ENCODE measurements at regions of chr3 and their contacts with region 1.

Region 1: DNA sequence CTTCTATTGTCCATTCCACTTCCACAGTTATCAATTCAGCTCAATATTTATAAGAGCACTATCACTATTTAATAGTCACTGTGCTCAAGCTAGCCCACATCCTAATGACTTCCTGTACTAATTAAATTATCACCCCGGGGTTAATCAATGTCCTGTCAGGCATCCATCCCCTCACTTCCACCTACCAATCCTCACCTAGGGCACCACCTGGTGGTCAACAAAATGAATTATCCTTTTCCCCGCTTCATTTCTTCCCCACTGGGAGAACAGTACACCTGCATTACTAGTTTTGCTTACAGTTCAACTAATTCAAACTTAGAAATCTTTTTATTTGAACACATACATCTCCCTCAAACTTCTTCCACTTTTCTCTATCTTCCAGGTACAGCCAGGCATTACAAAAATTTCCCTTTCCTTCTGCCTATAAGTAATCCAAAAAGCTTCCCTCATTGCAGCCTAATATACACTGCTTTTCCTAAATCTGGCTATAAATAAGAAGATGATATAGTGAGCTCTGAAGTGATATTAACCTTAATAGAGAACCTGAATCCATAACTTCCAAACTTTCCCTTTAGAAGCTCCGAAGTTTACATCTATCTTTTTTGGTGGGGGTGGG is 68.5 kb downstream of the TMCC1 start:
- DNase-seq: peak; percentile 39 to 52
- H3K4me3 ChIP-seq: no peak overlapping the region
- H3K27ac ChIP-seq: no peak overlapping the region
- H3K4me1 ChIP-seq: peaks cover 32% of the 10 kb centered on the region
- H3K27me3 ChIP-seq: no peaks in the 10 kb centered on the region
- CTCF ChIP-seq: peak; percentile 87

Region 2: GRCh38 chr3:129323651-129324294 is 501.3 kb before region 1 on chr3:
- CTCF ChIA-PET with region 1: no interaction called
- POLR2A ChIA-PET with region 1: no interaction called
- intact Hi-C with region 1: loop called (anchors 5 kb)
- DNase-seq: no peak
- H3K4me3 ChIP-seq: no peak overlapping the region
- H3K27ac ChIP-seq: no peak overlapping the region
- H3K4me1 ChIP-seq: no peaks in the 10 kb centered on the region
- H3K27me3 ChIP-seq: no peaks in the 10 kb centered on the region
- CTCF ChIP-seq: no peak; the same call in 1 of the 2 replicates

Region 3: GRCh38 chr3:129490242-129491045 is 334.6 kb before region 1 on chr3:
- CTCF ChIA-PET with region 1: interaction called, 17 read pairs
- POLR2A ChIA-PET with region 1: no interaction called
- intact Hi-C with region 1: loop called (anchors 1 kb)
- DNase-seq: peak; percentile 80 to 84
- H3K4me3 ChIP-seq: no peak overlapping the region
- H3K27ac ChIP-seq: peak overlapping the region; percentile 66
- H3K4me1 ChIP-seq: peaks cover 49% of the 10 kb centered on the region
- H3K27me3 ChIP-seq: no peaks in the 10 kb centered on the region
- CTCF ChIP-seq: peak; percentile 91

Region 4: DNA sequence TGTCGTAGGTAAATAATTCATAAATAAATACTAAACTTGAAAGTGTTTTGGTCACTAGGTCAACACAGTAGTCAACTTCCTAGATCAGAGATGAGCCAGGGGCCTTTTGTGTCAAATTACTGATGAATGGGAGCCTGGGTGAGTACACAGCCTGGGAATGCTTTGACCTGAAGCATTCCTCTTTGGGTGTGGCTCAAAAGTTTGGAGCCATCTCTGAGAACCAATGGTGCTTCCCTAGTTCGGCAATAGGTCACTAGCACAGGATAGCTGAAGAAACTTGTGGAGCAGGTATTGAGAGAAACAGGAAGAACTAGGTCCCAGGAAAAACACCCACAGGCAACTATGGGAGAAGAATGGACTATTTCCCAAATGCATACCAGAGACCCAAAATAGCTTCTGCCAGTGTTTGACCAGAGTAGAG is 162.0 kb before region 1 on chr3:
- CTCF ChIA-PET with region 1: interaction called, 3 read pairs
- POLR2A ChIA-PET with region 1: no interaction called
- intact Hi-C with region 1: loop called (anchors 1 kb)
- DNase-seq: peak; percentile 91 to 100
- H3K4me3 ChIP-seq: no peak overlapping the region
- H3K27ac ChIP-seq: peak overlapping the region; percentile 98
- H3K4me1 ChIP-seq: peaks cover 93% of the 10 kb centered on the region
- H3K27me3 ChIP-seq: no peaks in the 10 kb centered on the region
- CTCF ChIP-seq: no peak

Region 5: GRCh38 chr3:129994883-129995559 is 170.0 kb after region 1 on chr3:
- CTCF ChIA-PET with region 1: no interaction called
- POLR2A ChIA-PET with region 1: no interaction called
- intact Hi-C with region 1: loop called (anchors 5 kb)
- DNase-seq: no peak
- H3K4me3 ChIP-seq: no peak overlapping the region
- H3K27ac ChIP-seq: no peak overlapping the region
- H3K4me1 ChIP-seq: no peaks in the 10 kb centered on the region
- H3K27me3 ChIP-seq: no peaks in the 10 kb centered on the region
- CTCF ChIP-seq: no peak